ENCODE measurements at regions of chr17 and their contacts with region 1.

Region 1: GRCh38 chr17:67717624-67718329 is at the start of gene NOL11:
- DNase-seq: peak; percentile 100
- ATAC-seq: peak; percentile 96
- H3K4me3 Mint-ChIP-seq: peak within 1 kb of the TSS; percentile 88
- H3K27ac Mint-ChIP-seq: peak within 1 kb of the TSS; percentile 98
- H3K4me1 Mint-ChIP-seq: peaks cover 19% of the 10 kb centered on the region
- H3K27me3 Mint-ChIP-seq: no peaks in the 10 kb centered on the region
- total RNA-seq, gene NOL11: 79.3 to 79.7 TPM

Region 2: GRCh38 chr17:67245073-67245755 is 472.6 kb before region 1 on chr17 and contains the start of gene HELZ:
- CTCF ChIA-PET with region 1: no interaction called
- POLR2A ChIA-PET with region 1: no interaction called
- intact Hi-C with region 1: loop called in 1 of 2 experiments (anchors 2 kb)
- DNase-seq: peak; percentile 79
- ATAC-seq: peak; percentile 71
- H3K4me3 Mint-ChIP-seq: peak within 1 kb of the TSS; percentile 94
- H3K27ac Mint-ChIP-seq: peak within 1 kb of the TSS; percentile 85
- H3K4me1 Mint-ChIP-seq: peaks cover 40% of the 10 kb centered on the region
- H3K27me3 Mint-ChIP-seq: peaks cover 2% of the 10 kb centered on the region
- total RNA-seq, gene HELZ: 55.3 to 58.0 TPM

Region 3: GRCh38 chr17:67366193-67367157 is 351.3 kb before region 1 on chr17 and contains the start of gene PSMD12:
- CTCF ChIA-PET with region 1: interaction called, 4 read pairs
- POLR2A ChIA-PET with region 1: no interaction called
- intact Hi-C with region 1: loop called (anchors 1 to 2 kb)
- DNase-seq: peak; percentile 96
- ATAC-seq: peak; percentile 78
- H3K4me3 Mint-ChIP-seq: peak within 1 kb of the TSS; percentile 94
- H3K27ac Mint-ChIP-seq: peak within 1 kb of the TSS; percentile 96
- H3K4me1 Mint-ChIP-seq: peaks cover 43% of the 10 kb centered on the region
- H3K27me3 Mint-ChIP-seq: no peaks in the 10 kb centered on the region
- total RNA-seq, gene PSMD12: 100 to 101 TPM

Region 4: GRCh38 chr17:67751101-67752074 is 33.6 kb after region 1 on chr17:
- CTCF ChIA-PET with region 1: interaction called, 3 read pairs
- POLR2A ChIA-PET with region 1: interaction called, 14 read pairs
- intact Hi-C with region 1: no loop called
- DNase-seq: no peak
- ATAC-seq: no peak
- H3K4me3 Mint-ChIP-seq: no peak overlapping the region
- H3K27ac Mint-ChIP-seq: no peak overlapping the region
- H3K4me1 Mint-ChIP-seq: peaks cover 4% of the 10 kb centered on the region
- H3K27me3 Mint-ChIP-seq: no peaks in the 10 kb centered on the region

Region 5: GRCh38 chr17:67779098-67779672 is 61.4 kb after region 1 on chr17:
- CTCF ChIA-PET with region 1: interaction called, 4 read pairs
- POLR2A ChIA-PET with region 1: no interaction called
- intact Hi-C with region 1: loop called in 1 of 2 experiments (anchors 1 kb)
- DNase-seq: peak; percentile 65
- ATAC-seq: peak; percentile 72
- H3K4me3 Mint-ChIP-seq: no peak overlapping the region
- H3K27ac Mint-ChIP-seq: no peak overlapping the region
- H3K4me1 Mint-ChIP-seq: no peaks in the 10 kb centered on the region
- H3K27me3 Mint-ChIP-seq: no peaks in the 10 kb centered on the region

Region 6: DNA sequence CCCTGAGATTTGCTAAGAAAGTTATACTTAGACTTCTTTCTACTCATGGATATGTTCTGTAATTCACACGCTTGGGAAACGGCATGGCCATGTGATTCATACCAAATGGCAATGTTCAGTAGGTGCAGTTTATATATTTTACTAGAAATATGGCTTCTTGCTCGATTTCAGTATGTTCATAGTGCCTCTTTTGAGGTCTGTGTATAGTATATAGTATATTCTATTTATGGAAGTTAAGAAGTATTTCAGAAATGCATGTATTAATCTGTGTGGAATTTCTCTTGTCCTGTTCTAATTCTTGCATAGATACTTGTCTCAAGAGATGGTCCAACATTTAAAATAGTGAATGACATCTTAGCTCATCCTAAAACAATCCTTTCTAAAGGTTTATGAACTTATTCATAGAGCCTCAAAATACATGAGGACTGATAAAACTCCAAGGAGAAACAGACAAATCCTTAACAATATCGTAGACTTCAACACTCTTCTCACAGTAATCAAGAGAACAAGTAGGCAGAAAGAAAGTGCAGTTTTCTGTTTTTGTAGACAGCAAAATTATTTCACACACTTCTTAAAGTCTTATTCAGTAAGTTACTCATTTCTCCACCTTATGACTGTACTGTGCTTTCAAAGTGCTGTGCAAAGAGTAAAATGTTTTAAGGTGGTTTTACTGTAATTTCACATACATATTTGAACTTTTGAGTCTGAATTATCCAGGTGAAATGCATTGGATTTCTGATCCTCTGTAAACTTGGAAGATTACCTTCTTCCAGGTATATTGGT is 118.6 kb after region 1 on chr17:
- CTCF ChIA-PET with region 1: no interaction called
- POLR2A ChIA-PET with region 1: no interaction called
- intact Hi-C with region 1: no loop called
- DNase-seq: no peak
- ATAC-seq: peak; percentile 93
- H3K4me3 Mint-ChIP-seq: peak overlapping the region; percentile 29
- H3K27ac Mint-ChIP-seq: peak overlapping the region; percentile 68
- H3K4me1 Mint-ChIP-seq: peaks cover 76% of the 10 kb centered on the region
- H3K27me3 Mint-ChIP-seq: no peaks in the 10 kb centered on the region

Region 7: DNA sequence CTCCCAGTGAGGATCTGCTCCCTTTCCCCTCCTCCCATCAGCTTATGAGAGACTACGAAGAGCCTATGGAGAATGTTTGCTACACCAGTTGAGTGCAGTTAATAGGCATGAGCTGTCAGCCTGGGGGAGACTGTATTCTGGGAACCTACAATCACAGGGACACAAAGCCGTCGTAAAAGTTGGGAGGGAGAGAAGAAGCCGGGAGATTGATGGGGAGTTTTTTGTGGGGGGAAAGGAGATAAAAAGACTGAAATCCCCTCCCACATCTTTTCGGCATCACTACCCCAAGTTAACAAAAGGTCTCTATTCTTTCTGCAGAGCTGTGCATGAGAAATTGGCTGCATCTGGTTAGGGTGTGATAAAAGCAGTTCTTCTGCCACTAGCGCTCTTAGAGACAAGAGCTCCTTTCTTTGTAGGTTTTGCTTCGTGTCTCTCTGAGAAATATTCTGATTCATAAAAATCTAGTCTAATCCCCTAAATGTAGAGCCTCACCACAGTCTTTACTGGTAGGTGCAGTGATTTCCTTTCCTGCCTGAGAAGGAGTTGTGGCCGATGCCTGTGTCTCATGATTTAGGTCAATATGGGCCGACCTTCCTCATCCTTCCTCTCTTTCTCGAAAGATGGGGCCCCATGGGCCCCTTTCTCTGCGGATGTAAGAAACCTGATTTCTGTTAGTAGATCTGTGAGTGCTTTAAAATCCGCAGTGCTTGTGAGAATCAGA is 184.9 kb after region 1 on chr17:
- CTCF ChIA-PET with region 1: no interaction called
- POLR2A ChIA-PET with region 1: no interaction called
- intact Hi-C with region 1: no loop called
- DNase-seq: no peak
- ATAC-seq: no peak
- H3K4me3 Mint-ChIP-seq: no peak overlapping the region
- H3K27ac Mint-ChIP-seq: no peak overlapping the region
- H3K4me1 Mint-ChIP-seq: no peaks in the 10 kb centered on the region
- H3K27me3 Mint-ChIP-seq: no peaks in the 10 kb centered on the region

Region 8: DNA sequence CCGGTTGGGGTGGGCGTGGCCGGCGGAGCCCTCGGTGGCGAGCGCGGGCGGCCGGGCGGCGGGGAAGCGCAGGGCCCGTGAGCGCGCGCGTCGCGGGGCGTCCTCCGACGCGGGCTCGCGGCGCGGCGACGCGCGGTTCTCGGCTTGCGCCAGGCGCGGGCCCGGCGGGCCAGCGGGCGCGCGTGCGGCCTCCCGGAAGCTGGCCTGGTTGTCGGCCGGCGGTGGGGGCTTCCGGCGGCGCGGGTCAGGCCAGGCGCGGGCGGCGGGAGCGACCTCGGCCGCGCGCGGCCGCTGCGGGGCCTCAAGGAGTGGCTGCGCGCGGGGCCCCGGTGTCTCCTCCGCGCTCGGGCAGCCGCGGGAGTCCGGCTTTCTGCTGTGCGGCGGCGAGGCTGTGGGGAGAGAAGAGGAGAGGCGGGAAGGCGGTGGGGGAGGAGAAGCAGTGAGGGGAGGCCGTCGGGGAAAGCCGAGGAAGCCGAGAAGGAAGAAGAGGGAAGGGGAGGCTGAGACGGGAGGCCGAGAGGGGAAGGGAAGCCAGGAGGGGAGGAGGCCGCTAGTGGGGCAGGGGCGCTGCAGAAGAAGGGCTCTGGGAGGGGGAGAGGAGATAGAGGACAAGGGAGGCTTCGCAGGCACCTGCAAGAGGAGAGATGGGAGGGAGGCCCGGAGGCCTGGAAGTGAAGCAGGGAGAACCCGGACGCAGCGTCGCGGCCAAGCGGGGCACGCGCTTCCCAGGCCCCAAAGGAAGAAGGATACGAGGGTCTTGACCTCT is 276.0 kb after region 1 on chr17:
- CTCF ChIA-PET with region 1: no interaction called
- POLR2A ChIA-PET with region 1: no interaction called
- intact Hi-C with region 1: loop called in 1 of 2 experiments (anchors 1 kb)
- DNase-seq: peak; percentile 84
- ATAC-seq: peak; percentile 57
- H3K4me3 Mint-ChIP-seq: peak overlapping the region; percentile 75
- H3K27ac Mint-ChIP-seq: peak overlapping the region; percentile 84
- H3K4me1 Mint-ChIP-seq: peaks cover 26% of the 10 kb centered on the region
- H3K27me3 Mint-ChIP-seq: peaks cover 13% of the 10 kb centered on the region

Region 9: DNA sequence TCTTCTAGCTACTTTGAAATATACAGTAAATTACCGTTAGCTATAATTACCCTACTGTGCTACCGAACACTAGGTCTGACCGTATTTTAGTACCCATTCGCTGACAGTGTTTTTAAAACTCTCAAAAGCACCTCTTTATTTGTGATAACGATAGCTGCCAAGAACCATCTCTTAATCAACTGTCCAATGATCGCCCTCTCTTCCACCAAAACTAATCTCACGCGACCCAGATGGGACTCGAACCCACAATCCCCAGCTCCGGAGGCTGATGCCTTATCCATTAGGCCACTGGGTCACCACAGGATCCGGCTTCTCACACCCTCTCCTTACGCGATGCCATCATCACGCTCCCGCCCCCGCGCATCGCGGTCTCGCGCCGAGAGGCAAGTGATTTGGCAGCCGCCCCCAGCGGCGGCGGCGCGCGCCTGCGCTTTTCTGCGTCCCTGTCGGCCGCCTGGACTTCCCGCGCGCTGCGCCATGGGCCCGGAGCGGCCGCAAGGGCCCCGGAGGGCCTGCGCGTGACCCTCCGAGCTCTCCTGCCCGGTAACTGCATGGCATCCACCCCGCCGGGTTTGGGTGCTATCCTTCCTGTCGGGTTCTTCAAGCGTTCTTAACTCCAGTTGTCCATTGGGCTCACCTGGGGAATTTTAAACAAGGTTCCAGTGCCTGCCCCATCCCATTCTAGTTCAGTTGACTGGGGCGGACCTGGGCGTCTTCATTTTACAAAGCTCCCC is 302.1 kb after region 1 on chr17:
- CTCF ChIA-PET with region 1: no interaction called
- POLR2A ChIA-PET with region 1: no interaction called
- intact Hi-C with region 1: no loop called
- DNase-seq: peak; percentile 98
- ATAC-seq: peak; percentile 93
- H3K4me3 Mint-ChIP-seq: peak overlapping the region; percentile 78
- H3K27ac Mint-ChIP-seq: peak overlapping the region; percentile 93
- H3K4me1 Mint-ChIP-seq: peaks cover 8% of the 10 kb centered on the region
- H3K27me3 Mint-ChIP-seq: no peaks in the 10 kb centered on the region

Region 10: GRCh38 chr17:68512247-68512982 is 794.6 kb after region 1 on chr17 and contains the start of gene PRKAR1A:
- CTCF ChIA-PET with region 1: no interaction called
- POLR2A ChIA-PET with region 1: no interaction called
- intact Hi-C with region 1: loop called in 1 of 2 experiments (anchors 5 kb)
- DNase-seq: peak; percentile 95
- ATAC-seq: peak; percentile 92
- H3K4me3 Mint-ChIP-seq: peak within 1 kb of the TSS; percentile 93
- H3K27ac Mint-ChIP-seq: peak within 1 kb of the TSS; percentile 97
- H3K4me1 Mint-ChIP-seq: peaks cover 42% of the 10 kb centered on the region
- H3K27me3 Mint-ChIP-seq: no peaks in the 10 kb centered on the region
- total RNA-seq, gene PRKAR1A: 165 to 167 TPM